AG04450 (cell line): ENCODE measurements at regions of chr4 and their contacts with region 1.

Region 1: GRCh38 chr4:158624889-158625478 is 46.7 kb downstream of the C4orf46 start:
- DNase-seq: peak; percentile 27
- H3K4me3 ChIP-seq: no peak overlapping the region
- H3K27ac ChIP-seq: no peak overlapping the region
- H3K27me3 ChIP-seq: no peaks in the 10 kb centered on the region
- CTCF ChIP-seq: peak; percentile 79

Region 2: DNA sequence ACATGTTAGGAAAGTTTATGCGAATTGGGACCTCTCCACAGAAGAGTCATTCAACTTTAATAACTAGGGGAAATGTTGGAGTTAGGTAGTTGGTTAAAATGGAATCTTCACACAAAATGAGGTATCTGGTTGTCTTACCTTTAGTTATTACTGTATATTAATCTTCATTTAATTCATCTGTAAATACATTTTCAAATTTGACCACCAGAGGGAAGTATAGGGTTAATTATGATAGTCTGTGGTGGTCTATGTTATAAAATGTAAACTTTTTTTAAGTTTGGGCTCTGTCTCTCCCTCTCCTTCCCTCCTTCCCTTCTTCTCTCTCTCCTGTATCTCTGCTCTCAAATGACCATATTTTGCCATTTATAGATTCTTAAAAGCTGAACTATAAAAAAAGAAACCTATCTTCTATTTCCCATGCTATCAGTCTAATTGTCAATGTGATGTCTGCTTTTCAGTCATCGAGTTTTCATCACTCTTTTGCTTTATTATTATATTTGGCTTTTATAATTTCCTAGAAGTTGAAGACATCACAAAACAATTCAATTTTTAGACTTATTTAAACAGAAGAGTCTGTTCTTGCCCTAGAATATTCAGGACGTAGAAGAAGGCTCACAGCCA is 364.9 kb before region 1 on chr4:
- CTCF ChIA-PET with region 1: interaction called, 92 read pairs
- POLR2A ChIA-PET with region 1: interaction called, 4 read pairs
- DNase-seq: no peak
- H3K4me3 ChIP-seq: no peak overlapping the region
- H3K27ac ChIP-seq: no peak overlapping the region
- H3K27me3 ChIP-seq: no peaks in the 10 kb centered on the region
- CTCF ChIP-seq: peak; percentile 35

Region 3: DNA sequence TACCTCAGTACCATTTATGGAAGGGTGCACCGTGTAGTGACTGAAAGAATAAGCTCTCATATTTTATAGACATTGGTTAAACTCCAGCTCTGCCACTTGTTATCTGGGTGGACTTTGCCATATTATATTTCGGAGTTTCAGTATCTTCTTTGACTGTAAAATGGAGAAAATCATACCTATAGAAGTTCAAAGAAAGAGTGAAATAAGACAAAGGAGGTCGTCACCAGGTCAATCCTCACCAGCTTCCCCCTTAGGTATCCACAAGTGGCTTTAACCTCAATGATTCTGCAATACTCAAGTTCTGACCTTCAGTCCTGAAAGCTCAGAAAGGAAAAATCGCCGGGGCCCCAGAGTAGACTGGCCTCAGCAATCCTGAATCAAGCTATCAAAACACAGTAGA is 350.3 kb before region 1 on chr4:
- CTCF ChIA-PET with region 1: interaction called, 12 read pairs
- POLR2A ChIA-PET with region 1: no interaction called
- DNase-seq: no peak
- H3K4me3 ChIP-seq: no peak overlapping the region
- H3K27ac ChIP-seq: no peak overlapping the region
- H3K27me3 ChIP-seq: no peaks in the 10 kb centered on the region
- CTCF ChIP-seq: no peak